CD4-positive, alpha-beta T cell (primary cell): ENCODE measurements at regions of chr2 and their contacts with region 1.

Region 1: GRCh38 chr2:119476301-119477021 is 44.8 kb downstream of the TMEM37 start:
- DNase-seq: peak in 8 of 14 experiments; percentile 5 to 60 (median 16)
- ATAC-seq: peak; percentile 21
- H3K4me3 ChIP-seq: no peak overlapping the region
- H3K4me3 Mint-ChIP-seq: no peak overlapping the region
- H3K27ac ChIP-seq: no peak overlapping the region
- H3K27ac Mint-ChIP-seq: no peak overlapping the region
- H3K4me1 ChIP-seq: no peaks in the 10 kb centered on the region
- H3K4me1 Mint-ChIP-seq: no peaks in the 10 kb centered on the region
- H3K27me3 ChIP-seq: no peaks in the 10 kb centered on the region
- H3K27me3 Mint-ChIP-seq: peaks cover 20% of the 10 kb centered on the region
- CTCF ChIP-seq: peak; percentile 68

Region 2: GRCh38 chr2:118221666-118222594 is 1254.5 kb before region 1 on chr2:
- CTCF ChIA-PET with region 1: no interaction called
- POLR2A ChIA-PET with region 1: no interaction called
- intact Hi-C with region 1: loop called in 1 of 2 experiments (anchors 10 kb)
- DNase-seq: peak in 9 of 14 experiments; percentile 6 to 77 (median 10)
- ATAC-seq: peak; percentile 75
- H3K4me3 ChIP-seq: no peak overlapping the region
- H3K4me3 Mint-ChIP-seq: peak overlapping the region; percentile 12
- H3K27ac ChIP-seq: no peak overlapping the region
- H3K27ac Mint-ChIP-seq: no peak overlapping the region
- H3K4me1 ChIP-seq: peaks cover 19% of the 10 kb centered on the region
- H3K4me1 Mint-ChIP-seq: peaks cover 28% of the 10 kb centered on the region
- H3K27me3 ChIP-seq: peaks cover 44 to 70% of the 10 kb centered on the region in 2 experiments
- H3K27me3 Mint-ChIP-seq: peaks cover 78% of the 10 kb centered on the region
- CTCF ChIP-seq: peak; percentile 87

Region 3: GRCh38 chr2:119174216-119175037 is 302.0 kb before region 1 on chr2:
- CTCF ChIA-PET with region 1: no interaction called
- POLR2A ChIA-PET with region 1: no interaction called
- intact Hi-C with region 1: loop called in 1 of 2 experiments (anchors 5 kb)
- DNase-seq: peak; percentile 22 to 69 (median 48)
- ATAC-seq: peak; percentile 59
- H3K4me3 ChIP-seq: no peak overlapping the region
- H3K4me3 Mint-ChIP-seq: no peak overlapping the region
- H3K27ac ChIP-seq: no peak overlapping the region
- H3K27ac Mint-ChIP-seq: no peak overlapping the region
- H3K4me1 ChIP-seq: peaks cover 2% of the 10 kb centered on the region
- H3K4me1 Mint-ChIP-seq: no peaks in the 10 kb centered on the region
- H3K27me3 ChIP-seq: no peaks in the 10 kb centered on the region
- H3K27me3 Mint-ChIP-seq: peaks cover under 1% of the 10 kb centered on the region
- CTCF ChIP-seq: peak; percentile 90

Region 4: DNA sequence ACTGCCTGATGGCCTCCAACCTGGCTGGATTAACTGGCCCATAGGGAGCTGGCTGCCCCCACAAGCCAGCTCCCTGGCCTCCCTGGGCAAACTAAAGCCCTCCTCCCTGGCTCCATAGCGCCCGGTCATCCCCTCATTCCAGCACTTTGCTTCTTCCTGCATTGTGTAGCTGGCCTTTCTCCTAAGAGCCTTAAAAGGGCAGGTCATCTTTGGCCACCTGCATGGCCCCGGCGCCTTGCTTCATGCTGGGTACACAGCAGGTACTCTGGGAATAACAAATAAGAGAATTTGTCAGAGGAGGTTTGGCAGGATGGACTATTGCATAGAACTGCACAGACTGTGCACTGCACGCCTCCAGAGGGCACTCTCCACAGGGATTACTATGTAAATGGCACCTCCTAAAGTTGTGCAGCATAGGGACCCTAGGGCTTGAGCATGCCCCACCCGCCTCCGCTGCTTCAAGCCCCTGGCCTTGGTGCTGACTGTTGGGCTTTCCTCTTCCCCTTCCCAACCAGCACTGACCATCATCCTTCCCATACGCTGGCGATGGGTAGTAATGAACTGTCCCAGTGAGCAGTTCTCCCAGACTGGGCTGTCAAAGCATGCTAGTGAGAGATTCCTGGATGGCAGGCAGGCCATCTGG is 242.0 kb before region 1 on chr2:
- CTCF ChIA-PET with region 1: no interaction called
- POLR2A ChIA-PET with region 1: no interaction called
- intact Hi-C with region 1: loop called in 1 of 2 experiments (anchors 5 kb)
- DNase-seq: no peak
- ATAC-seq: no peak
- H3K4me3 ChIP-seq: no peak overlapping the region
- H3K4me3 Mint-ChIP-seq: no peak overlapping the region
- H3K27ac ChIP-seq: no peak overlapping the region
- H3K27ac Mint-ChIP-seq: no peak overlapping the region
- H3K4me1 ChIP-seq: no peaks in the 10 kb centered on the region
- H3K4me1 Mint-ChIP-seq: no peaks in the 10 kb centered on the region
- H3K27me3 ChIP-seq: no peaks in the 10 kb centered on the region
- H3K27me3 Mint-ChIP-seq: no peaks in the 10 kb centered on the region
- CTCF ChIP-seq: no peak

Region 5: DNA sequence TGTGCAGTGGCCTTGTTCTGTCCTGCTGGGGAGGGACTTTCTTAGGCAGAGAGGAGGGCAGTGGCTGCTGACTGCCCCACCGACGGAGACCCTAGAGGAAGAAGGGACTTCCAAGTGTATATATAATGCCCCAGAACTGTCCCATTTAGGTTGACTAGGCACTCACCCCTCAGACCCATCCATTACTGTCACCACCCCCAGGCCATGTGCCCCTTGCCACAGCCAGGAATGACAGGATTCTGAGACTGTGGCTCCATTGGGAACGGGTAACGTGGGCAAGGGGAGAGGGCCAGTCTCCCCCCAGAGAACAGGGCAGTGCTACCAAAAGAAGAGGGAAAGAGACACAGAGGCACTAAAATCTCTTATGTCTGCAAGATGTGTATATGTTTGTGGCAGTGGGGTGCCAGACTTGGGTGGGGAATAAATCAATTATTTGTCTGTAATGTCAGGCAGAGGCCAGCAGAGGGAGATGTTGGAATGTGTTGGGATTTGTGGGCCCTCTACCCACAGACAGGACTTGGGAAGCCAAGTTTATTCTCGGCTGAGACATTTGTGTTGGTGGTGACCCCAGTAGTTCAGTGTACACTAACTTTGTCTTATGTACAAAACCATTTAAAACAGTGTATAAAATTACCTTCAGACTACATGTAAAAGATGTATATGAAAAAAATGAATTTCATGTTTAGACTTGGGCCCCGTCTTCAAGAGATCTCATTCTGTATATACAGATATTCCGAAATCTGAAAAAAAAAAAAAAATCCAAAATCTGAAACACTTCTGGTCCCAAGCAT is 68.8 kb before region 1 on chr2:
- CTCF ChIA-PET with region 1: no interaction called
- POLR2A ChIA-PET with region 1: no interaction called
- intact Hi-C with region 1: loop called in 1 of 2 experiments (anchors 5 kb)
- DNase-seq: peak in 6 of 14 experiments; percentile 5 to 56 (median 38)
- ATAC-seq: no peak
- H3K4me3 ChIP-seq: no peak overlapping the region
- H3K4me3 Mint-ChIP-seq: no peak overlapping the region
- H3K27ac ChIP-seq: no peak overlapping the region
- H3K27ac Mint-ChIP-seq: no peak overlapping the region
- H3K4me1 ChIP-seq: no peaks in the 10 kb centered on the region
- H3K4me1 Mint-ChIP-seq: no peaks in the 10 kb centered on the region
- H3K27me3 ChIP-seq: no peaks in the 10 kb centered on the region
- H3K27me3 Mint-ChIP-seq: peaks cover 8% of the 10 kb centered on the region
- CTCF ChIP-seq: peak; percentile 61